ENCODE measurements at regions of chr9 and their contacts with region 1.

Region 1: DNA sequence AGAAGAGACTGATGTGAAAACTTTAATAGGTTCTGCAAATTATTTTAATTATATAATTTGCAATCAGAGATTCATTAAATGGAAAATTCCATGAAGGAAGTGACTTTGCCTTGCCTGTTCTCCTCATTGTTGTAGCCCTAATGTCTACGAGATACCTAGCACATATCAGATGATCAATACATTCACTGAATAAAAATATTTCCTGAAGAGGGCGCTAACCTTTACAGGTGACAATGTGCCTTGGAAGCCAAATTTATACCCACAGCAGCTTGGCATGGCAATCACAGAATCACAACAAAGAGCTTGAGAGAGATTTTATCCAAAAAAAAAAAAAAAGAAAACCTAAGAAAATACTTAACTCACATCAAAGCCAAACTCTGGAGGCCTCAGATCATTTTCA is 17.4 kb downstream of the HAUS6 start:
- DNase-seq: no peak
- ATAC-seq: no peak
- H3K4me3 ChIP-seq: no peak overlapping the region
- H3K27ac ChIP-seq: no peak overlapping the region
- H3K4me1 ChIP-seq: no peaks in the 10 kb centered on the region
- H3K27me3 ChIP-seq: no peaks in the 10 kb centered on the region
- CTCF ChIP-seq: peak in 6 of 7 experiments; percentile 17 to 57 (median 42)
- POLR2A ChIP-seq: no peak

Region 2: DNA sequence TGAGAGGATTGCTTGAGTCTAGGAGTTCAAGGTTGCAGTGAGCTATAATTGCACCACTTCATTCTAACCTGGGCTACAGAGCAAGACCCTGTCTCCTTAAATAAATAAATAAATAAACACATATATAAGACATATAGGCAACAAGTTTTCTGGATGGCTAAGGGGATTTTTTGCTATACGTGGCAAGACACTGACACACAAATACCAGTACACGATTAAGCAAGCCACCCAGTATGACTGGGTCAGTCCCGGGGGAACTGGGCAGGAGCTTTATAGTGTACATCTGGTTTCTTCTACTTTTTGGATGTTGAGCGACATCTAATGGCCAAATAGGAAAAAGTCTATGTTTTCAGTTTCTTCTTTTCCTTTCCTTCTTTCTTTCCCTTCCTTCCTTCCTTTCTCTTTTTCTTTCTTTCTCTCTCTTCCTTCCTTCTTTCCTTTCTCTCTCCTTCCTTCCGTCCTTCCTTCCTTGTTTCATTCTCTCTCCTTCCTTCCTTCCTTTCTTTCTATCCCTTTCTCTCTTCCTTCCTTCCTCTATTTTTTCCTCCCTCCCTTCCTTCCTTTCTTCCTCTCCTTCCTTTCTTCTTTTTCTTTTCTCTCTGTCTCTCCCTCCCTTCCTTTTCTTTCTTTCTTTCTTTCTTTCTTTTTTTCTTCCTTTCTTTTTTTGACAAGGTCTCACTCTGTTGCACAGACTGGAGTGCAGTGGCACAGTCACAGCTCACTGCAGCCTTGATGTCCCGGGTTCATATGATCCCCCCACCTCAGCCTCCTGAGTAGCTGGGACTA is 89.0 kb after region 1 on chr9:
- intact Hi-C with region 1: loop called (anchors 10 kb)
- DNase-seq: peak; percentile 45 to 69 (median 62)
- ATAC-seq: peak; percentile 77
- H3K4me3 ChIP-seq: no peak overlapping the region
- H3K27ac ChIP-seq: no peak overlapping the region
- H3K4me1 ChIP-seq: peaks cover 12% of the 10 kb centered on the region
- H3K27me3 ChIP-seq: no peaks in the 10 kb centered on the region
- CTCF ChIP-seq: peak; percentile 28 to 85 (median 58)
- POLR2A ChIP-seq: no peak